ENCODE measurements at regions of chr4 and their contacts with region 1.

Region 1: GRCh38 chr4:103019308-103020124 is at the start of gene SLC9B1:
- DNase-seq: peak; percentile 95 to 97 (median 96)
- ATAC-seq: peak; percentile 99 to 100 (median 100)
- H3K4me3 ChIP-seq: peak within 1 kb of the TSS; percentile 30 to 67 (median 59)
- H3K27ac ChIP-seq: peak within 1 kb of the TSS; percentile 65 to 92 (median 88)
- H3K4me1 ChIP-seq: peaks cover 0 to 18% (median 5%) of the 10 kb centered on the region in 12 donors
- H3K27me3 ChIP-seq: no peaks in the 10 kb centered on the region
- CTCF ChIP-seq: no peak
- POLR2A ChIP-seq: peak in 1 of 2 donors; percentile 69
- total RNA-seq, gene SLC9B1: 0.28 to 1.8 (median 0.61) TPM in 6 of 9 donors, not detected in the others

Region 2: GRCh38 chr4:102344954-102345794 is 674.3 kb before region 1 on chr4 and contains the start of gene SLC39A8:
- intact Hi-C with region 1: loop called in 1 of 10 experiments (anchors 10 kb)
- DNase-seq: peak; percentile 81 to 92 (median 85)
- ATAC-seq: peak; percentile 86 to 97 (median 96)
- H3K4me3 ChIP-seq: peak within 1 kb of the TSS; percentile 42 to 82 (median 58)
- H3K27ac ChIP-seq: peak within 1 kb of the TSS in 11 of 12 donors; percentile 7 to 92 (median 58)
- H3K4me1 ChIP-seq: peaks cover 0 to 49% (median 7%) of the 10 kb centered on the region in 12 donors
- H3K27me3 ChIP-seq: no peaks in the 10 kb centered on the region
- CTCF ChIP-seq: peak; percentile 47 to 86 (median 78)
- POLR2A ChIP-seq: peak in 1 of 2 donors; percentile 46
- total RNA-seq, gene SLC39A8: 1.9 to 51.3 (median 3.0) TPM

Region 3: DNA sequence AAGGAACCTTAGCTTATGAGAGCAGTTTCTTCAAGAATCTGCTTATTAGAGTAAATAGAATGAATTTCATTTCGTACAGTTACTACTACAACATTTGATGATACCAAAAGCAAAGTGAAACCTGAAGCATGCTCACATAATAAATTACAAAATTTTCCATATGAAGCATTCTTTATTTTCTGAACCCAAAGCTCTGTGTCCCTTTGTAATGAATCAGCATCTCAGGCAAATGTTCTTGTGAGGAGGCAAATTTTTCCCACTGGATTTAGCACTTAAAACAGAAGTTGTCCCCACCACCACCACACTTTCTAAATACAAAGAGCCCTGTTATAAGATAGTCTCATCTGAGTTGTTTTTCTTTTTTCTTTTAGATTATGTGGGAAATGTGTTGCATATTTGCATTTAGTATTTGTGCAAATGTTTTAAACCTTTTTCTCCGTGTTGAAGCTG is 589.0 kb before region 1 on chr4:
- intact Hi-C with region 1: loop called in 4 of 10 experiments (anchors 5 kb)
- DNase-seq: no peak
- ATAC-seq: peak in 1 of 4 donors; percentile 33
- H3K4me3 ChIP-seq: peak overlapping the region; percentile 15 to 74 (median 62)
- H3K27ac ChIP-seq: peak overlapping the region in 9 of 12 donors; percentile 34 to 73 (median 58)
- H3K4me1 ChIP-seq: peaks cover 0 to 6% (median 0%) of the 10 kb centered on the region in 12 donors
- H3K27me3 ChIP-seq: no peaks in the 10 kb centered on the region
- CTCF ChIP-seq: no peak
- POLR2A ChIP-seq: no peak

Region 4: DNA sequence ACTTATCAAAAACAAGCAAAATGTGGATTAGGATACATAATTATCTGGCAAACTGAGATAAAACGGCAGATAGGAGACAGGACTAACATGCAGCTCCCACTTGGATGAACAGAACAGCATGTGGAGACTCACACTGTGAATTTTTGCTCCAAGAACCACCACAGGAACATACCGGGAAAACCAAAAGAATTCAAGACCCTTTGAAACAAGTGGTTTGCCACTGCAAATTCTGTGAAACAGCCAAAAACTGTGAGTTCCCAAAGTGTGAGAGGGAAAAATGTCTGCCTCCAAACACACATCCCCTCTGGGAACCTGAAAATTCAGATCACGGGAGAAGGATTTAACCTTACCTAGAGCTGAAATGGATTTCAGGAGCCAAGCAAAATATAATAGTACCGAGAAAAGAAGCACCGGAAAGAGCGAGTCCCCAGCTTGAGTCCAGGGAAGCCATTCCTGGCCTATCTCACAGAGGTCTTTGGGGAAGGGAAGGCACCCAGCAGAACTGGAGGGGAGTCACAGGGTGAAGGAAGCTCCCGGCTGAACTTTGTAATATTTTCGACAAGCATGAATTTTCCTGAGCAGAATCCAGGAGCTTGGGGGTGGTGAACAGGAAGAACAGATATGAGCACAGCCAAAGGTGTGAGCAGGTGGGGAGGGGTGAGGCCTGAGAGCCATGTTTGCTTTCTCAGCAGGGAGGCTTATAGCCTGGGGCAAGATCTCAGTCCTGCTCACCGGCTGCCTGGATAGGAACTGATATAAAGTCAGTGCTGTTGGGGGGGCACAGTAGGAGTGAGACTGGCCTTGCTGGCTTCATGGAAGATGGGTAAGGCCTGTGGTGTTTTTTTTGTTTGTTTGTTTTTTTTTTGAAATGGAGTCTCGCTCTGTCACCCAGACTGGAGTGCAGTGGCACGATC is 282.6 kb before region 1 on chr4:
- intact Hi-C with region 1: no loop called
- DNase-seq: no peak
- ATAC-seq: no peak
- H3K4me3 ChIP-seq: no peak overlapping the region
- H3K27ac ChIP-seq: no peak overlapping the region
- H3K4me1 ChIP-seq: peaks cover 0 to 37% (median 11%) of the 10 kb centered on the region in 12 donors
- H3K27me3 ChIP-seq: no peaks in the 10 kb centered on the region
- CTCF ChIP-seq: no peak
- POLR2A ChIP-seq: no peak

Region 5: GRCh38 chr4:102760645-102761295 is 258.7 kb before region 1 on chr4 and contains the start of gene MANBA:
- intact Hi-C with region 1: loop called in 1 of 10 experiments (anchors 10 kb)
- DNase-seq: peak; percentile 86 to 93 (median 89)
- ATAC-seq: peak; percentile 96 to 99 (median 98)
- H3K4me3 ChIP-seq: peak within 1 kb of the TSS; percentile 70 to 99 (median 84)
- H3K27ac ChIP-seq: peak within 1 kb of the TSS in 11 of 12 donors; percentile 70 to 98 (median 82)
- H3K4me1 ChIP-seq: peaks cover 0 to 34% (median 11%) of the 10 kb centered on the region in 12 donors
- H3K27me3 ChIP-seq: no peaks in the 10 kb centered on the region
- CTCF ChIP-seq: peak in 1 of 12 donors; percentile 22
- POLR2A ChIP-seq: peak in 1 of 2 donors; percentile 72
- total RNA-seq, gene MANBA: 25.0 to 44.0 (median 36.9) TPM

Region 6: GRCh38 chr4:102826890-102827673 is 192.4 kb before region 1 on chr4 and contains the start of gene UBE2D3:
- intact Hi-C with region 1: loop called in 4 of 10 experiments (anchors 1 to 10 kb)
- DNase-seq: peak; percentile 94 to 97 (median 95)
- ATAC-seq: peak; percentile 59 to 78 (median 74)
- H3K4me3 ChIP-seq: peak within 1 kb of the TSS; percentile 83 to 99 (median 91)
- H3K27ac ChIP-seq: peak within 1 kb of the TSS; percentile 100
- H3K4me1 ChIP-seq: peaks cover 0 to 46% (median 37%) of the 10 kb centered on the region in 12 donors
- H3K27me3 ChIP-seq: no peaks in the 10 kb centered on the region
- CTCF ChIP-seq: peak in 4 of 12 donors; percentile 16 to 32 (median 22)
- POLR2A ChIP-seq: peak in 1 of 2 donors; percentile 25
- total RNA-seq, gene UBE2D3: 216 to 381 (median 258) TPM